Panc1 (cell line): ENCODE measurements at regions of chr20 and their contacts with region 1.

Region 1: GRCh38 chr20:32227744-32228688 is 20.3 kb downstream of the POFUT1 start:
- DNase-seq: no peak
- ATAC-seq: no peak
- H3K4me3 ChIP-seq: no peak overlapping the region
- H3K27ac ChIP-seq: no peak overlapping the region
- H3K4me1 ChIP-seq: no peaks in the 10 kb centered on the region
- H3K27me3 ChIP-seq: no peaks in the 10 kb centered on the region
- CTCF ChIP-seq: no peak

Region 2: DNA sequence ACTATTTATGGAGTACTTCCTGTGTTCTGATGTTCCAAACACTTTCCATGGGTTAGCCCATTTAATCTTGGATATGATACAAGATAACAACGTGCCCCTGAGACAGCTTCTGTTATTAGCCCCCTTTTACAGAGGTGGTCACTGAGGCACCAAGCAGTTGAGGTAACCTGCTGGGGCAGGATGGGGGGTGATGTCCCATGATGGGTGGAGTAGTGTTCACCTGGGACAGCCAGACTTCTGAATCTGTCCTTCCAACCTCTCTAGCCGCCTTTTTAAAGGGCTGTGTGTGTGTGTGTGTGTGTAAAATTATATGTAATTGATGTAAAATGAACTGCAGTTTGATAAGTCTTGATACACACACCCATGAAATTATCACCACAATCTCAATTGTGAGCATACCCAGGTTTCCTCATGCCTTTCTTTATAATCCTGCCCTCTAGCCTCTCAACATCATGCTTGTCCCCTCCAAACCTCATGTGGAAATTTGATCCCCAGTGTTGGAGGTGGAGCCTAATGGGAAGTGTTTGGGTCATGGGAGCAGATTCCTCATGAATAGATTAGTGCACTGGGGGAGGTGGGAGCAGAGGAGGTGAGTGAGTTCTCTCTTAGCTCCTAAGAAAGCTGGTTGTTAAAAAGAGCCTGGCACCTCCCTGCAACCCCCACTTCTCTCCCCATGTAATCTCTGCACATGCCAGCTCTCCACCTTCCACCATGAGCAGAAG is 59.7 kb before region 1 on chr20:
- CTCF ChIA-PET with region 1: no interaction called
- POLR2A ChIA-PET with region 1: no interaction called
- in situ Hi-C with region 1: no loop called
- intact Hi-C with region 1: no loop called
- DNase-seq: no peak
- ATAC-seq: no peak
- H3K4me3 ChIP-seq: no peak overlapping the region
- H3K27ac ChIP-seq: no peak overlapping the region
- H3K4me1 ChIP-seq: no peaks in the 10 kb centered on the region
- H3K27me3 ChIP-seq: no peaks in the 10 kb centered on the region
- CTCF ChIP-seq: no peak

Region 3: DNA sequence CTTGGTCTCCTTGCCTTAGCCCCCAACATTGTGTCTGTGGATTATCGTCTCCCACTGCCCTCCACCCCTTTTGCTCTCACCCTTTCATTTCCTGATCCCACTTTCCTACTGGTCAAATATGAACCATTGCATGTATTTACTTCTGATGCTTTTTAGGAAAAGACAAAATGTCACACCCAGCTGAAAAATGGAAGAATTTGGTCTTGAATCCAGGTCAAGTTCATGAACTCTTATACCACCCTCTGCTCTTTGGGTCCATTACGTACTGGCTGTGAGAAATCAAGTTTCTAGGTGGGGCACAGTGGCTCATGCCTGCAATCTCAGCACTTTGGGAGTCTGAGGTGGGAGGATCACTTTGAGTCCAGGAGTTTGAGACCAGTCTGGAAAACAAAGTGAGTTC is 33.6 kb after region 1 on chr20:
- CTCF ChIA-PET with region 1: no interaction called
- POLR2A ChIA-PET with region 1: no interaction called
- in situ Hi-C with region 1: no loop called
- intact Hi-C with region 1: no loop called
- DNase-seq: no peak
- ATAC-seq: no peak
- H3K4me3 ChIP-seq: no peak overlapping the region
- H3K27ac ChIP-seq: no peak overlapping the region
- H3K4me1 ChIP-seq: 0 out of 2 replicates have a peak, but pooled peaks cover 2% of the 10 kb centered on the region
- H3K27me3 ChIP-seq: no peaks in the 10 kb centered on the region
- CTCF ChIP-seq: no peak

Region 4: DNA sequence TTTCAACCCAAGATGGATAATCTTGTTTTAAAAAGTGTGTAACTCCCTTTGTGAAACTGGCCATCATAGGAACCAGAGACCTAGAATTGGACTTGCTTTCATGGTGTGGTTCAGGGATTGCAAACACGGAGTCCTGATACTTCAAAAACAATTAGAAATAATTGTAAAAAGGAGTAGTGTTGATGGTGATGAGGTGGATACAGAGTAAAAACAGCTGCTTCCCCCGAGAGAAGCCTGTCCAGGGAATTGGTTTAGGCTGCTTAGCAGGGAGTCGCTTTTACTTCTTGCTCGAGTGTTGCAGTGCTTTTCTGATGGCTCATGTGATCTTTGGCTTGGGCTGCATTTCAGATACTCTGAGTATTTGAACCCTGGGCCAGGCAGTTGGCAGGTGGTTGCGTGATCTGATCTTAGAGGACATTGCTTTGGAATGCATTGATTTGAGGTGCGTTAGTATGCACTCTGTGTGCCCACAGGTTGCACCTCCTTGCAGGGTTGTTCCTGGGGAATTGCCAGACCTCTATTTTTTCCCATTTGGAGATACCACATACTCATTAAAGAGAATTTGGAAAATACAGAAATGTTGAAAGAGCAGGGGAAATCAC is 68.9 kb after region 1 on chr20:
- CTCF ChIA-PET with region 1: no interaction called
- POLR2A ChIA-PET with region 1: interaction called, 10 read pairs
- in situ Hi-C with region 1: no loop called
- intact Hi-C with region 1: no loop called
- DNase-seq: no peak
- ATAC-seq: no peak
- H3K4me3 ChIP-seq: no peak overlapping the region
- H3K27ac ChIP-seq: no peak overlapping the region
- H3K4me1 ChIP-seq: 0 out of 2 replicates have a peak, but pooled peaks cover 3% of the 10 kb centered on the region
- H3K27me3 ChIP-seq: no peaks in the 10 kb centered on the region
- CTCF ChIP-seq: no peak

Region 5: GRCh38 chr20:32336918-32337347 is 108.9 kb after region 1 on chr20:
- CTCF ChIA-PET with region 1: no interaction called
- POLR2A ChIA-PET with region 1: no interaction called
- in situ Hi-C with region 1: no loop called
- intact Hi-C with region 1: no loop called
- DNase-seq: peak; percentile 51
- ATAC-seq: peak; percentile 67
- H3K4me3 ChIP-seq: no peak overlapping the region
- H3K27ac ChIP-seq: no peak overlapping the region
- H3K4me1 ChIP-seq: no peaks in the 10 kb centered on the region
- H3K27me3 ChIP-seq: no peaks in the 10 kb centered on the region
- CTCF ChIP-seq: no peak

Region 6: GRCh38 chr20:32456869-32457478 is 229.0 kb after region 1 on chr20:
- CTCF ChIA-PET with region 1: no interaction called
- POLR2A ChIA-PET with region 1: no interaction called
- in situ Hi-C with region 1: no loop called
- intact Hi-C with region 1: no loop called
- DNase-seq: no peak
- ATAC-seq: peak; percentile 50
- H3K4me3 ChIP-seq: peak overlapping the region; percentile 26 to 42
- H3K27ac ChIP-seq: no peak overlapping the region
- H3K4me1 ChIP-seq: peaks cover 13% of the 10 kb centered on the region
- H3K27me3 ChIP-seq: no peaks in the 10 kb centered on the region
- CTCF ChIP-seq: peak; percentile 94; the same call in 1 of the 2 replicates

Region 7: GRCh38 chr20:32773855-32774254 is 545.8 kb after region 1 on chr20:
- CTCF ChIA-PET with region 1: interaction called, 10 read pairs
- POLR2A ChIA-PET with region 1: no interaction called
- in situ Hi-C with region 1: no loop called
- intact Hi-C with region 1: no loop called
- DNase-seq: no peak
- ATAC-seq: no peak
- H3K4me3 ChIP-seq: no peak overlapping the region
- H3K27ac ChIP-seq: no peak overlapping the region
- H3K4me1 ChIP-seq: peaks cover 6% of the 10 kb centered on the region
- H3K27me3 ChIP-seq: no peaks in the 10 kb centered on the region
- CTCF ChIP-seq: no peak